Gastrocnemius medialis (tissue), 4 donors: ENCODE measurements at regions of chr16 and their contacts with region 1.

Region 1: GRCh38 chr16:21194771-21195301 is 16.5 kb downstream of the ZP2 start:
- DNase-seq: no peak
- ATAC-seq: no peak
- H3K4me3 ChIP-seq: no peak overlapping the region
- H3K27ac ChIP-seq: no peak overlapping the region
- H3K4me1 ChIP-seq: no peaks in the 10 kb centered on the region
- H3K27me3 ChIP-seq: peaks cover 0 to 2% (median 0%) of the 10 kb centered on the region in 3 donors
- CTCF ChIP-seq: no peak
- POLR2A ChIP-seq: no peak

Region 2: DNA sequence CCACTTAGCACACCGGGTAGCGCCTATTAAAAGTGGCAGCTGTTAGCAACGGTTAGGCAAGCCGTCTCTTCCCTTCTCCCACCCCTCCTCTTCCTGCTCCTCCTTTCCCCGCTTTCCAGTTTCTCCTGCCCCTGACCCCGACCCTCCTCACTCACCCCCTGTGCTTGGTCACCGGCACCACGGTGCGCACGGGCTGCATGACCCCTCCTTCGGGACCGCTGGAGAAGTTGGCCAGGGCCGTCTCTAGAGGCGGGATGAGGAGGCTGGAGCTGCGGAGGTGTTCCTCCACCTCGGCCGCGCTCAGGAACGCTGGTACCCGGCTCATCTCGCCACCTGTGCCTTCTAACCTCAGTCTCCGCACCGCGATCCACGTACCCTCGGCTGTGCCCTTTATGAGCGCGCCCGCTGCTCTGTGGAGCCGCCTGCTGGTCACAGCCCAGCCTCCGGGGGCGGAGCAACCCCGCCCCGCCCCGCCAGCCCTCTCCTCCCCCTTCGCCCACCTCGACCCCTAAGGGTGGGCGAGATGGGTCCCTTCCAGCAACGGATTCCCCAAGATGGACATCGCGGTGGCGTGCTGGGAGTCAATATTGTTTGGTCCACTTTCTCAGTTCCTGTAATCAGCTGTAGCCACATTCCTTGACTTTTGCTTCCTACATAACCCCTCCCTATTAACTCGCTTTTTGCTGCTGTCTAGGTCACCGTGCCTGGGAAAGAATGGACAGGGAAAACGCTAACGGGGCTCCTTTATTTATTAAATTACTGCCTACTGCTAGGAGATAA is 83.3 kb after region 1 on chr16 and contains the start of gene CRYM:
- in situ Hi-C with region 1: loop called in 1 of 4 experiments (anchors 25 kb)
- intact Hi-C with region 1: no loop called
- DNase-seq: no peak
- ATAC-seq: peak in 1 of 2 donors; percentile 66
- H3K4me3 ChIP-seq: peak within 1 kb of the TSS; percentile 24 to 44 (median 39)
- H3K27ac ChIP-seq: no peak within 1 kb of the TSS
- H3K4me1 ChIP-seq: peaks cover 3 to 5% of the 10 kb centered on the region in 2 donors
- H3K27me3 ChIP-seq: peaks cover 12 to 20% (median 20%) of the 10 kb centered on the region in 3 donors
- CTCF ChIP-seq: peak in 4 of 5 experiments; percentile 17 to 81 (median 54)
- POLR2A ChIP-seq: no peak
- total RNA-seq, gene CRYM: not detected

Region 3: GRCh38 chr16:22346483-22346882 is 1151.6 kb after region 1 on chr16:
- in situ Hi-C with region 1: loop called in 1 of 4 experiments (anchors 25 kb)
- intact Hi-C with region 1: no loop called
- DNase-seq: no peak
- ATAC-seq: no peak
- H3K4me3 ChIP-seq: no peak overlapping the region
- H3K27ac ChIP-seq: no peak overlapping the region
- H3K4me1 ChIP-seq: no peaks in the 10 kb centered on the region
- H3K27me3 ChIP-seq: no peaks in the 10 kb centered on the region
- CTCF ChIP-seq: no peak
- POLR2A ChIP-seq: no peak